PC-9 (cell line): ENCODE measurements at regions of chr7 and their contacts with region 1.

Region 1: DNA sequence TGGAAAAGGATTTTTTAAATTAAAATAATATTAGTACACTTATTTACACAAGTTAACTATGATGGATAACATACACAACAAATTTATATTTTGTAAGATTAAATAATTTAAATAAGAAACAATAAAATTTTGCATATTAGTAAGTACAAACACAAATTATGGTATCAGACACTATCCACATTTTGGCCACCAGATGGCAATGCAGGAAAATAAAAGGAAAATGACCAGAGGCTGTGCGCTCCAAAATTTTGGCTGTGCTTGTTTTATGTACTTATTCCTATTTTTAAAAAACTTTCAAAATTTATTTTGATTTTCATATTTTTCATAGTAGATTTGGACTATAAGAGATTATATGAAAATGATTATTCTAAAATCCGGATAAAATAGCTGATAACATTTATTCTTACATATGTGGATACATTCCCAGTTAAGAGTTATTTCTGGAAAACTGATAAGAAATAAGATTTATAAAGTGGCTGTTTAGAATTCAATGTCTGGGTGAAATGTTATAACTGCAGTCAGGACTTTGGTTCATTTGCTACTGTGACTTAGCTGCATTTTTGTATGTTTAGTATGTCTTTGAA is 274.7 kb upstream of the HGF start:
- DNase-seq: peak in 1 of 2 experiments; percentile 25
- H3K4me3 ChIP-seq: no peak overlapping the region
- H3K27ac ChIP-seq: no peak overlapping the region
- H3K4me1 ChIP-seq: peaks cover 4% of the 10 kb centered on the region
- H3K27me3 ChIP-seq: no peaks in the 10 kb centered on the region
- CTCF ChIP-seq: peak; percentile 82

Region 2: DNA sequence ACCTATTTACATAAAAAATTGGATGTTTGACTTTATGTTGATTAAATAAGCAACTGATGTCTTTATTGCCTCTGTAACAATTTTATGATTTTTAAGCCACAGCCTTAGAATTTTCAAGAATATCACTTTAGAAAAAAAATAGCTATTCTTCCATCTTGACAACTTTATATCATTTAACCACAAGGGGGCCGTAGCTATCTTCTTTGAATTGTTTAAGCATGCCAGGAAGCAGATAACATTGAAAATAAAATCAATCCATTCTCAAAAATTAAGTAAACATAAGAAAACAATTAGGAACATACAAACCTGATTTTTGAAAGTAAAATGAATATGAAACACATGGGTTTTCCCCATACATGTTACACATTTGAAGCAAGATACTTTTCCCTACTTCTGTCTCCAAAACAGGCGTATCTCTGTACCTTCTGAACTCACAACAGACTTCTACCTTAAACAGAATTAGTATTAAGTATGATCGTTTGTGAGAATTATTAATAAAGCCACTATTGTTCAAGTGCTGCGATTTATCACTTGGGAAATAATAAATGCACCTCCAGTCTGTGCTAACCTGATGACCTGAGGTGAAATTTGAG is 190.0 kb after region 1 on chr7:
- CTCF ChIA-PET with region 1: no interaction called
- POLR2A ChIA-PET with region 1: no interaction called
- intact Hi-C with region 1: loop called (anchors 5 kb)
- DNase-seq: no peak
- H3K4me3 ChIP-seq: no peak overlapping the region
- H3K27ac ChIP-seq: no peak overlapping the region
- H3K4me1 ChIP-seq: no peaks in the 10 kb centered on the region
- H3K27me3 ChIP-seq: no peaks in the 10 kb centered on the region
- CTCF ChIP-seq: peak; percentile 78

Region 3: DNA sequence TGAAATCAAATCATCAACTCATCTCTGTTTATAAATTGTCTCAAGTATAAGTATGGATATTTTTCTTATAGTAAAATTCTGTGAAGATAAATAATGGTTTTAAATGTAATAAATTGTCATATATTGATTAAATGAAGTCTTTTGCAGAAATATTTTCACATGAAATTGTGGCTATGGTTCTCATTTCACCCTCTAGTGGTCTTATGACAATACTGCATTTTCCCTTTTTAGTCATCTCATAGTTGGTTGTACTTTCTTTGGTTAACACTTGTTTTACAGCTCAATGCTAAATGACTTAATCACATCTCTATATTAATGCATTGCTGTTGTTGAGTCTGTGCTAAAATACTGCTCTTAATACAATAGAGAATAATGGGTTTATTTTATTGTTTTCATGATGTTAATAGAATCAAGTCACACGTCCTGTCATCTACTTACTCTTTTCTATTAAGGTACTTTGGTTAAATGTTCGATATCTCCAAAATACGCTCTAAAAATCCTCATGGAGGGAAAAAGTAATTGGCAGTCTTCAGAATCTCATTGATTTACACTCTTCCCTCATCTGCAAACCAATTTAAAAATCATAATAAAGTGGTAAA is 437.0 kb after region 1 on chr7:
- CTCF ChIA-PET with region 1: no interaction called
- POLR2A ChIA-PET with region 1: no interaction called
- intact Hi-C with region 1: loop called (anchors 5 kb)
- DNase-seq: no peak
- H3K4me3 ChIP-seq: no peak overlapping the region
- H3K27ac ChIP-seq: no peak overlapping the region
- H3K4me1 ChIP-seq: no peaks in the 10 kb centered on the region
- H3K27me3 ChIP-seq: no peaks in the 10 kb centered on the region
- CTCF ChIP-seq: peak; percentile 88

Region 4: DNA sequence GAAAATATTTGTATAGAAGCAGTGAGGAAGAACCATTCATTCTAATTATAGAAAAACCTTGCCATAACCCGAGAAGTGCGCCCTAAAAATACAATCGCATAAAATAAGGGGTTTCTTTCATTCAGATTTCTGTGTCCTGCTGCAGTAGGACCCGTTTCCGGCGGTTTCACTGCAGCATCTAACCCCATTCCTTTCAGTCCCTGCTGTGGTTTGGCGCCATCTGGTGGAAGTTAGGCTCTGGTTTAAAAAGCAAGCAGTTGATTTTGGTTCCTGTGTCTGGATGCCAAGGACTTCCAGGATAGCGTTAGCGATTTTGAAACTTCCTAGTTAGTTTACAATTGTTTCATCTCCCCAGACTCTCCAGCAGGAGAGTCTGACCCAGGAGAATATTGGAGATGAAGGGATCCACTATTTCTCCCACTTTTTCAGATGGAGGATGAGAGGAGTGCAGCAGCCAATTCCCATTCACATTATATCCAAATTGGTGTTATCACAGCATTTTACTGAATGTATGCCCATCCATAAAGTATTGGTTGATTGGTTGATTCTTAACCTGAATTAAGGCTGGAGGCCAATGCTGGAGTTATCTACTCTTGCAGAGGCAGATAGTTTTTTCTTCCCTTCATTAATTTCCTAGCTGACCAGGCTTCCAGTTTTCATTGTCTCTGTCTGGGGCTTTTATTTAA is 527.7 kb after region 1 on chr7:
- CTCF ChIA-PET with region 1: no interaction called
- POLR2A ChIA-PET with region 1: no interaction called
- intact Hi-C with region 1: loop called (anchors 1 kb)
- DNase-seq: peak; percentile 56 to 80
- H3K4me3 ChIP-seq: no peak overlapping the region
- H3K27ac ChIP-seq: no peak overlapping the region
- H3K4me1 ChIP-seq: no peaks in the 10 kb centered on the region
- H3K27me3 ChIP-seq: no peaks in the 10 kb centered on the region
- CTCF ChIP-seq: peak; percentile 92

Region 5: DNA sequence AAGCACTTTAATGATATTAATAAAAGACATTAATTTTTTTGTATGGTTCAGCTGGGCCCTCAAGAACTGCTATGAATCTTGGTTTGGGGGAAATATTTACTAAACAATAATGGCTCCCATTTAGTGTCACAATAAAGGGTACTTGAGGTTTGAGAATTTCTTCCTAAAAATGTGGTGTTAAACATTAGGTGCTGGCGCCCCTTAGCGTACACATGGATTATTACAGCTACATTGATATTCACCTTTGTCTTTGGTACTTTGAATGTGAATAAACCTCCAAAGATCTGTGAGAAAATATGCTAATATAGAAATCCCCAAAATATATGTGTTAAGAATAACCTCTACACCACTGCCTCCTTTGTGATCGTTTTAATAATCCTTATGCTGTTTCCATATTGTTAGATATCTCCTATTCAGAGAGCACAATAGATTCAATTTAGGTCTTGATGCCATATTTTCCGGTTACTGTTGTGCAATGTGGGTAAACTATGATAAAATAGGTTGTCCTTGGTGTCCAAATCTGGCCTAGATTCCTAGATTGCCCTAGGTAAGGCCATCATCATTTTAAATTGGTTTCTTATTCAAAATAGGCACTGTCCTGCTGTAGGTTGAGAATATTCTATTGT is 560.8 kb after region 1 on chr7:
- CTCF ChIA-PET with region 1: no interaction called
- POLR2A ChIA-PET with region 1: no interaction called
- intact Hi-C with region 1: loop called (anchors 1 kb)
- DNase-seq: peak in 1 of 2 experiments; percentile 15
- H3K4me3 ChIP-seq: no peak overlapping the region
- H3K27ac ChIP-seq: no peak overlapping the region
- H3K4me1 ChIP-seq: no peaks in the 10 kb centered on the region
- H3K27me3 ChIP-seq: no peaks in the 10 kb centered on the region
- CTCF ChIP-seq: peak; percentile 87

Region 6: DNA sequence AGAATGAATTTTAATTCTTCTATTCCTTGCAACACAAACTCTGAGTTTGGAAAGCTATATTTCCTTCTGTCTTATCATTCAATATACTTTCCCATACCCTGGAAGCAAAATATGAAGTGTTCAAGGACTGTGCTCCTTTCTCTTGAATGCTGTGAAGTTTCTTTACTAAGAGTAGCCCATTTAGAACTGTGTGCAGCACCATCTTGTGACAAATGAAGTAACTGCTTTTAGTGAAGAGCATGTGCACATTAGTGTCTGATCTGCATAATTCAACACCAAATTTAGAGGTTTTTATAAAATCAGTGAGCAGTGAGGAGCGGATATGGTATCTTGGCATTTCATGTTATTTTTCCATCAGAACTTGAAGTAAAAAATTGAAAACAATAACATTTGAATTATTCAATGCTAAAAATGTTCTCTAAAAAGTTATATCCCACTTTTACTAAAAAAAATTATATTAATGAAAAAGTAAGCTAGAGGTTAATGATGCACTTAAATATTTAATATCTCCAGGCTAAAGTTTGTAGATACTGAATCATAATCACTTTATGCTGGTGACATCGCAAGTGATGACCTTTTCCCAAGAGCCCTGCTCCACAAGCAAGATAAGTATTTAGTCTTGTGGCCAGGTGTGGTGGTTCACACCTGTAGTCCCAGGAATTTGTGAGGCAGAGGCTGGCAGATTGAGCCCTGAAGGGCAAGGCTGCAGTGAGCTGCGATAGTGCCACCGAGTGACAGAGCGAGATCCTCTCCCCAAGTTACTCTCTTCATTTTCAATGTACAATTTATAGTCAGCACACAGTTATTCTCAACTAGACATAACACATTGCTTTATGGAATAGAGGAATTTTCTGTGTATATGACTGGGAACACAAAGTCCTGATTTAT is 1226.9 kb after region 1 on chr7:
- CTCF ChIA-PET with region 1: no interaction called
- POLR2A ChIA-PET with region 1: no interaction called
- intact Hi-C with region 1: loop called (anchors 10 kb)
- DNase-seq: no peak
- H3K4me3 ChIP-seq: no peak overlapping the region
- H3K27ac ChIP-seq: no peak overlapping the region
- H3K4me1 ChIP-seq: no peaks in the 10 kb centered on the region
- H3K27me3 ChIP-seq: no peaks in the 10 kb centered on the region
- CTCF ChIP-seq: peak; percentile 65; the same call in 1 of the 2 replicates